ENCODE measurements at regions of chr2 and their contacts with region 1.

Region 1: GRCh38 chr2:25115902-25116301 is 52.5 kb downstream of the POMC start:
- DNase-seq: no peak
- ATAC-seq: no peak
- H3K4me3 ChIP-seq: no peak overlapping the region
- H3K27ac ChIP-seq: no peak overlapping the region
- H3K4me1 ChIP-seq: peaks cover 0 to 6% (median 0%) of the 10 kb centered on the region in 9 donors
- H3K27me3 ChIP-seq: no peaks in the 10 kb centered on the region
- CTCF ChIP-seq: no peak

Region 2: DNA sequence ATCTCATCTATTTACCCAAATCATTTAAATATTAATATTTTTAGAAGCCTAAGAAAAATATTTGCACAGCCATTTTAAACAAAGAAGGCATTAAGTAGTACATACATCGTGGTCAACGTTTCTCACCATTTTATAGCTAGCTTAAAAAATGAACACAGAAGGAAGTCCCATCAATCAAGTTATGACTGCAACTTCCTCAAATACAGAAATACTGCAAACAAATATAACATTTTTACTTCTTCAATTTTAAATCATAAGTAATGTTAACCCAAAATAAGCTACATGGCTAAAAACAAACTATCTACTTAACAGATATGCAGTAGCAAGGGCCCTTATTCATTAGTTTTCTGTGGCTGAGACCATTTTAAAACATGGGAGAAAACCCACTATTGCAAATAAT is 786.2 kb before region 1 on chr2:
- intact Hi-C with region 1: no loop called
- DNase-seq: no peak
- ATAC-seq: no peak
- H3K4me3 ChIP-seq: no peak overlapping the region
- H3K27ac ChIP-seq: peak overlapping the region in 1 of 10 donors; percentile 33
- H3K4me1 ChIP-seq: peaks cover 3 to 69% (median 39%) of the 10 kb centered on the region in 9 donors
- H3K27me3 ChIP-seq: no peaks in the 10 kb centered on the region
- CTCF ChIP-seq: no peak

Region 3: DNA sequence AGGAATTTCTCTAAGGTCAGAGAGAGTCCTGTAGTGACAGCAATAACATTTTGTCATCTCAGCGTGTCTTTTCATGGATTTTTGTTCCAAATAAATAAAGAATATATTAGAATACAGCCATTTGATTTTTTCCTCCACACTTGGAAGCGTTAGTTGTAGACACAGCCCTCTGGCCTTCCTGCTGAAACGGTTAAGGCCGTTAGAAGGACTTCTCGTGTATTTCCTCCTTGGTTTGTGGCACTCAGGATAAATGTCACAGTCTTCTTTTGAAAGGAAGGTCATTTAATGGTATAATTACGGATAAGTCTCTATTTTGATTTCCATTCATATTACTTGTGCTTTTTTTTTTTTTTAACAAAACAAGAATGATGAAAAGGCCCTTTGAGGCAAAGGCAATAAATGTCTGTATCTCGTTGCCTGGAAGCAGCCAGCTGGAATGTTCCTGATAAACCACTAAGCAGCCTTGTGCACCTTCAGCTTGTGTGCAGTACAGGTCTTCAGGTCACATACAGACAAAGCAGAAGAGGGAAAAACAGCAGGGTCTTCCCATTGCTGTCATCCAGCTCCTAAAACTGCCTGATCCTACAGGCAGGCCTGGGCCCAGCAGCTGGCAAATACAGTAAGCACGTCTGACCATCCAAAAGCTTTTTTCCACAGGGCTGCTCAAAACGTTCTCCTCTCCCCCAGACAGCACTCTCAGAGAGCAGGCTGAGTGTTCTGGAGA is 59.6 kb before region 1 on chr2:
- intact Hi-C with region 1: loop called in 1 of 10 experiments (anchors 10 kb)
- DNase-seq: no peak
- ATAC-seq: peak in 1 of 8 donors; percentile 22
- H3K4me3 ChIP-seq: no peak overlapping the region
- H3K27ac ChIP-seq: peak overlapping the region in 1 of 10 donors; percentile 59
- H3K4me1 ChIP-seq: peaks cover 0 to 32% (median 8%) of the 10 kb centered on the region in 9 donors
- H3K27me3 ChIP-seq: no peaks in the 10 kb centered on the region
- CTCF ChIP-seq: no peak